Ascending aorta (tissue), 2 donors: ENCODE measurements at regions of chr19 and their contacts with region 1.

Region 1: GRCh38 chr19:56350416-56351045 is 35.9 kb upstream of the ZSCAN5A start:
- DNase-seq: no peak
- H3K4me3 ChIP-seq: no peak overlapping the region
- H3K27ac ChIP-seq: no peak overlapping the region
- H3K4me1 ChIP-seq: no peaks in the 10 kb centered on the region
- H3K27me3 ChIP-seq: no peaks in the 10 kb centered on the region
- CTCF ChIP-seq: peak; percentile 63 to 79 (median 68)

Region 2: DNA sequence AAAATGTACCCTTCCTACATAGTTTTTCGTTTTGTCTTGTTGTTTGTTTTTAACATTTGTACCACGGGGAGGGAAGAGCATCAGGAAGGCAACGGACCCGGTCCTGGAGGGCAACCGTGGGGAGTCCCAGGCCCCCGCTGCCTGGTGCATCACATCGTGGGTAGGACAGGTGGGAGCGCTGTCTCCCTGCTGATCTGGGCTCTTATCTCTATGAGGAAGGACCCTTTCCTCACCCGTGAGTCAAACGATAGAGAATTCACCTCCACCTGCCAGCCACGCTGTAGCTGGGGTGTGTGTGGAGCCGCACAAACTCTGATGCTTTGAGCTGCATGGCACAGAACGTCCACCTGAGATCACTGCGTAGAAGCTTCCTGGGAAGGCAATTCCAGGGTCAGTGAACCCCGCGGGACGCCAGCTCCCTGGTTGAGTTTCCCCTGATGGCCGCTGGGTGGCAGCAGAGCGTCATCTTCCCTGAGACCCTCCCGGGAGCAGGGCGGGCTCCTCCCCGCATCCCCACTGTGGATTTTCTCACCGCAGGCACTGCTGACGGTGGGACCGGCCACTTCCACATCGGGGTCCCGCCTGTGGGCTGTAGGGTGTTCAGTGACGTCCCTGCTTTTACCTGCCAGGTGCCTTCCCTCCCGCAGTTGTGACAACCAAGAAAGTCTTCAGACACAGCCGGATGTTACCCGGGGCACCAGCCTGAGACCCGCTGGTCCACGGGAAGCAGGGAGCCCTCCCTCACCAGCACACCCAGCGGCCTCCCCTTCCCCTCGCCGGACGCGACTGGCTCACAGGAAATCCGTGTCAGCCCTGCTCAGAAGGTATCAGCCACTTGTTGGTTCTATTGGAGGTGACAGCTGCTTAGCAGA is 284.1 kb before region 1 on chr19:
- intact Hi-C with region 1: loop called (anchors 1 kb)
- DNase-seq: peak in 1 of 2 donors; percentile 70
- H3K4me3 ChIP-seq: peak overlapping the region in 1 of 2 donors; percentile 38
- H3K27ac ChIP-seq: no peak overlapping the region
- H3K4me1 ChIP-seq: peaks cover 0 to 6% of the 10 kb centered on the region in 2 donors
- H3K27me3 ChIP-seq: no peaks in the 10 kb centered on the region
- CTCF ChIP-seq: peak; percentile 61 to 90 (median 85)

Region 3: GRCh38 chr19:56076498-56076897 is 274.0 kb before region 1 on chr19:
- intact Hi-C with region 1: loop called (anchors 2 kb)
- DNase-seq: no peak
- H3K4me3 ChIP-seq: no peak overlapping the region
- H3K27ac ChIP-seq: no peak overlapping the region
- H3K4me1 ChIP-seq: peaks cover 0 to 5% of the 10 kb centered on the region in 2 donors
- H3K27me3 ChIP-seq: no peaks in the 10 kb centered on the region
- CTCF ChIP-seq: peak; percentile 51 to 85 (median 82)